ENCODE measurements at regions of chr1 and their contacts with region 1.

Region 1: DNA sequence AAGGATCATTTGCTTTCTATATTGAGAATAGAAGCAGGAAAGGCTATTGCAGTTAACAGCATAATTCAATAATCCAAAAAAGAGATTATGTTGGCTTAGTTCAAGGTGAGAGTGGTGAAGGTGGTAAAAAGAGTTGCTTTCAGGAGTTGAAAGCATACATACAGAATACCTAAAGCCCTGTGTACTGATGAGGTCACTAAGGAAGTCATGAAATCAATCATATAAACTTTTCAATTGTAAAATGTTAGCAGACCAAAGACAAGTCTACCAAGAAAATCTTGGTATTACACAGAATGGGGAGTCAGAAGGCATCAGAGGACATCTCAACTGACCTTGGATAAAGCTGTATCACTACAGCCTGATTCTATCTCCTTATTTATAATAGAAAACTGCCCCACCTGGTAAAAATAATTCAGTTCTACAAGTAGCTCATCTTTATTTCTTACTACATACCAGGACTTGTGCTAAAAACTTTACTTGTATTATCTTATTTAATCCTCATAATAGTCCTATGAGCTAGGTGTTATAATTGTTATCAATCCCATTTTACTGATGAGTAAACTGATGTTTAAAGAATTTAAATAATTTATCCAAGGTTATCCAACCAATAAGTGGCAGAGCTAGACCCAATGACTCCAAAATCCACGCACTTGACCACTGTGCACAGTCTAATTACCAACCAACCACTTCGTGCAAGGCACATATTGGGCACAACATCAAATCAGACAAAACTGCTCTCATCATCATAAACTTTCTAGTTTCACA is 40.9 kb downstream of the TUT4 start:
- DNase-seq: no peak
- H3K4me3 Mint-ChIP-seq: no peak overlapping the region
- H3K27ac Mint-ChIP-seq: no peak overlapping the region
- H3K4me1 Mint-ChIP-seq: peaks cover 5% of the 10 kb centered on the region
- H3K27me3 Mint-ChIP-seq: no peaks in the 10 kb centered on the region

Region 2: DNA sequence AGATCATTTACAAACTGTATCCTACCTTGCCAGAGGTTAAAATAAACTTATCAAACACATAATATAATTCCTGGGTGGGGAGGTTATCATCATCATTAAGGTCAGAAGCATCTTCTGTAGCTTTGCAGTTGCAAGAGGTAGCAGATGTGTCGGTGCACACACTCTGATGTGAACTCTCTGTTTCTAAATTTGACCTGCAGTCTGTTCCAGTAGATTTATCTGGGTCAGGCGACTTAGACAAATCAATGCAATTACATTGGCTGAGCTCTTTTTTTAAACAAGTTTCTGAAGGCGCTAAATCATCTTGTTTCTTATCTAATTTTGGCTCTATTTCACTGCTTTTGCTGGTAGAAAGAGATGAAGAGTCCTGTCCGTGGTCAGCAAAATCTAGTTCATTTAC is 37.2 kb before region 1 on chr1:
- CTCF ChIA-PET with region 1: no interaction called
- intact Hi-C with region 1: loop called (anchors 1 kb)
- DNase-seq: no peak
- H3K4me3 Mint-ChIP-seq: no peak overlapping the region
- H3K27ac Mint-ChIP-seq: no peak overlapping the region
- H3K4me1 Mint-ChIP-seq: peaks cover 4% of the 10 kb centered on the region
- H3K27me3 Mint-ChIP-seq: no peaks in the 10 kb centered on the region

Region 3: DNA sequence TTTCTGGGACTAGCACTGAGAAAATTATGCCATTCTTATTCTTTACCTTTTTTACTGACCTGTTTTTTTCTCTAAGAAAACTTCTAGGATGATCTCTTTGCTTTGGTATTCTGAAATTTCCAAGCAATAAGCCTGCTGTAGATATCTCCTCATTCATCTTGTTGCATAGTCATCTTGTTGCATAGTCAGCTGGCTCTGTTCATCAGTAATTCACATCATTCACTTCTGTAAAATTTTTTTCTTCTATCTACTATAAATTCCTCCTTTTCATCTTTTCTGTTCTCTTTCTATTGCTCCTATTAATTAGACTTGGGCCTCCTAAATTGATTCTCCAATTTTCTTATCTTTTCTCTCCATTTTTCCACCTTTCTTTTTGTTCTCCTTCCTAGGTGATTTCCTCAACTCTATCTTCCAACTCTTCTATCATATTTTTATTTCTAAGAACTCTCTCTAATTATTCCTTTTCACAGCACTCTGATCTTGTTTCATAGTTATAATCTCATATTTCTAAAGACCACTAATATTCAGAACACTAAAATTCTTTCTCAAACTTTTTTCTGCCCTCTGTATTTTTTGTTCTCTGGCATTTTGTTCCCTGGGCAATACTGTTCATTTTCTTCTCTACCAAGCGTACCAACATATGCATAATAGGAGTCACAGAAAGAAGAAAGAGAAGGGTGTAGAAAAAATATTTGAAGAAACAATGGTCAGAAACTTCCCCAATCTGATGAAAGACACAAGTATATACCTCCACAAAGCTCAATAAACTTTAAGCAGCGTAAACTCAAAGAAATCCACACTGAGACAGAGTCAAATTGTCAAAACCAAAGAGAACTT is 23.1 kb after region 1 on chr1:
- CTCF ChIA-PET with region 1: no interaction called
- intact Hi-C with region 1: no loop called
- DNase-seq: no peak
- H3K4me3 Mint-ChIP-seq: no peak overlapping the region
- H3K27ac Mint-ChIP-seq: peak overlapping the region; percentile 31
- H3K4me1 Mint-ChIP-seq: peaks cover 52% of the 10 kb centered on the region
- H3K27me3 Mint-ChIP-seq: no peaks in the 10 kb centered on the region